ENCODE measurements at regions of chr4 and their contacts with region 1.

Region 1: GRCh38 chr4:125283707-125284279 is 31.0 kb upstream of the FAT4 start:
- DNase-seq: no peak
- H3K4me3 ChIP-seq: no peak overlapping the region
- CTCF ChIP-seq: no peak

Region 2: DNA sequence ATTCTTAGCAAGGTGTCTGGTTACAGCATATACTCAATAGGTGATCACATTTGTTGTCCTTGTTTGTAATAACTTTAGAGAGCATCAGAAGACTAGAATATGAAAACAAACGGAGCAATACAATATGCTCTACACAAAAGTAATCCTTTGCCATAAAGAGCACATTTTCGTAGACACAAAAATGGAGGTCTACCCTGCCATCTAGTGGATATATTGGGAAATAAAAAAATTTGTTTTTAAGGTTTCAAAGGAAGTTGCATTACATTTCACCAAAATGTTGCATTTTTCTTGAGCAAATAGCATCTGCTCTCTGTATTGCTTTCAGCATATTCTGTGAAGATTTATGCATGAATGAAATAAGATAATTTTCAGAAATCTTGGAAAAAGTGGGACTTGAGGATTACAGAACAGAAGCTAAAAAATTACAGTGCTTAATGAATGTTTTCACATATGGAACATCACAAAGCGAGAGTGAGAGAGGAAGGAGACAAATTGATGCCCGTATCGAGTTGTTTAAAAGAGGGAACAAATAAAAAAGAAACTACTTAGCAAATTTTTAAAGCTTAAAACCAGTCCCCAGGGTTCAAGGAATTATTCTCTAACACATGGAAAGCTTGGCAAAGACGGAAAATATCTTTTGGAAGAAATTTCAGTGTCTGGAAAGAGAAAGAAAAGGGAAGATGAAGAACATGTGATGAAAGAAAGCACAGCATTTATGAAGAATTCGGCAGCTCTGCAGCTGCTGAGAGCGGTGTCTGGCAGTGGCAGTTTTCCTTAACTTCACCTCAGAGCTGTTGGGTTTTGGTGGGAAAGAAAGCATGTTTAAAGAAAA is 961.3 kb before region 1 on chr4:
- CTCF ChIA-PET with region 1: interaction called, 22 read pairs
- POLR2A ChIA-PET with region 1: no interaction called
- DNase-seq: no peak
- H3K4me3 ChIP-seq: no peak overlapping the region
- CTCF ChIP-seq: no peak

Region 3: DNA sequence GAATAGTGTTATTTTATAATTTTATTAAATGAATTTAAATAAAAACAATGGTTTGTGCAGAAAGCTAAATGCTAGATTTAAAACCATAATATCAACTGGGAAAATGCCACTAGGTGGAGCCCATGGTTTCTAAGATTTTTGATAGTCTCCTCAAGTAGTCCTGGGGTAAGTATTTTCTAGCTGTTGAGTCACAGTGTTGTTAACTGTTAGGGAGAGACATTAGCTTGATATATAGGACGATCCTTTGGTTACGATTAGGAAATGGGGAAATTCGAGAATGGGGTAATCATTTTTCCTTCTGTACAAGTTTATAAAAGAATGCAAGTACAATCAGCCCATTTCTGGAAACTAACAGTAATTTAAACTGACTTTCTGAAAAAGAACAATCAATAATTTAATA is 949.7 kb before region 1 on chr4:
- CTCF ChIA-PET with region 1: interaction called, 126 read pairs
- POLR2A ChIA-PET with region 1: no interaction called
- DNase-seq: peak; percentile 61
- H3K4me3 ChIP-seq: no peak overlapping the region
- CTCF ChIP-seq: peak; percentile 47

Region 4: GRCh38 chr4:124343661-124344171 is 940.1 kb before region 1 on chr4:
- CTCF ChIA-PET with region 1: interaction called, 20 read pairs
- POLR2A ChIA-PET with region 1: no interaction called
- DNase-seq: no peak
- H3K4me3 ChIP-seq: no peak overlapping the region
- CTCF ChIP-seq: no peak

Region 5: DNA sequence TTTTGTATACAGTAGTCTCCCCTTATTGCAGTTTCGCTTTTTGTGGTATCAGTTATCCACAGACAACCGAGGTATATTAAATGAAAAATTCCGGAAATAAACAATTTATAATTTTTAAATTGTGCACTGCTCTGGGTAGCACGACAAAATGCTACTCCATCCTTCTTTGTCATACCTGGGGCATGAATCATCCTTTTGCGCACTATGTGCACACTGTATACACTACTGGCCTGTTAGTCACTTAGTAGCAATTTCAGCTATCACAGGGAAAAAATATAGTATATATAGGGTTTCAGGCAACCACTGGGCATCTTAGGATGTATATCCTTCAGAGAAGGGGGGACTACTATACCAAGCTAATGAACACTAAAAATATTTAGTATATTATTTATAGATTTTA is 167.9 kb before region 1 on chr4:
- CTCF ChIA-PET with region 1: no interaction called
- POLR2A ChIA-PET with region 1: no interaction called
- DNase-seq: no peak
- H3K4me3 ChIP-seq: no peak overlapping the region
- CTCF ChIP-seq: no peak

Region 6: GRCh38 chr4:125420526-125420925 is 136.7 kb after region 1 on chr4:
- CTCF ChIA-PET with region 1: no interaction called
- POLR2A ChIA-PET with region 1: no interaction called
- DNase-seq: no peak
- H3K4me3 ChIP-seq: no peak overlapping the region
- CTCF ChIP-seq: no peak

Measured in AG04449 (cell line).